ENCODE measurements at regions of chr6 and their contacts with region 1.

Region 1: GRCh38 chr6:10528170-10528981 is 7.2 kb downstream of the GCNT2 start:
- DNase-seq: peak; percentile 88
- ATAC-seq: peak; percentile 78
- H3K4me3 ChIP-seq: peak overlapping the region; percentile 81
- H3K27ac ChIP-seq: peak overlapping the region; percentile 82
- H3K4me1 ChIP-seq: peaks cover 25% of the 10 kb centered on the region
- H3K27me3 ChIP-seq: no peaks in the 10 kb centered on the region
- CTCF ChIP-seq: 0 out of 2 replicates have a peak, but pooled peaks have one; percentile 9

Region 2: DNA sequence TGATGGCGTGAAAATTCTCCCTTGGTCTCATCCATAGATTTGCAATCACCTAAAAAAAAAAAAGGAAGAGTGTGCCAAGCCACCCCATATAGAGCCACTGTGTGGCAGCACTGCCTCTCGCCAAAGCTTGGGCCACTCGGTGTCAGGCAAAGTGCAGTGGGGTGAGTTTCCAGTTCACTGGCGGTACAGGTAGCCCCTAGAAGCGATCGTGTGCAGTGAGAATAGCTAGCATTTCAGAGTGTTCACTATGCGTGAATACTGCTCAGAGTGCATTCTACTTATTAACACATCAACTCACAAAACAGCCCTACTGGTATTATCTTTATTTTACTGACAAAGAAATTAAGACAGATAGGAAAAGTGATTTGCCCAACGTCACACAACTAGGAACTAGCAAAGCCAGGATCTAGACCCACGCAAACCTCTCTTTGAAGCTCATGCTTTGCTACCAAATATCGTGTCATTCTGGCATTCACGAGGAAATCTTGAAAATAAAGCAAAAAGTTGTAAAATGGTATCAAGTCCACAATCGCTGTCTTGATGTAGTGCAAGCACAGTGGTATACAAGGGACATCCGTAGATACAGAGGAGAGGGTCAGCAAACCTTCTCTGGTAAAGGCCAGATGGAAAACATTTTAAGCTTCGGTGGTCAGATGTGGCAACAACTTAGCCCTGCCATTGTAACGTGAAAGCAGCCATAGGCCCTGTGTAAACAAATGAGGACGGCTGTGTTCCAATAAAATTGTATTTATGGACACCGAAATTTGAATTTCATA is 17.6 kb before region 1 on chr6:
- CTCF ChIA-PET with region 1: no interaction called
- POLR2A ChIA-PET with region 1: no interaction called
- intact Hi-C with region 1: loop called (anchors 1 kb)
- DNase-seq: peak; percentile 77
- ATAC-seq: peak; percentile 98
- H3K4me3 ChIP-seq: peak overlapping the region; percentile 55
- H3K27ac ChIP-seq: no peak overlapping the region
- H3K4me1 ChIP-seq: peaks cover 11% of the 10 kb centered on the region
- H3K27me3 ChIP-seq: no peaks in the 10 kb centered on the region
- CTCF ChIP-seq: peak; percentile 92

Region 3: DNA sequence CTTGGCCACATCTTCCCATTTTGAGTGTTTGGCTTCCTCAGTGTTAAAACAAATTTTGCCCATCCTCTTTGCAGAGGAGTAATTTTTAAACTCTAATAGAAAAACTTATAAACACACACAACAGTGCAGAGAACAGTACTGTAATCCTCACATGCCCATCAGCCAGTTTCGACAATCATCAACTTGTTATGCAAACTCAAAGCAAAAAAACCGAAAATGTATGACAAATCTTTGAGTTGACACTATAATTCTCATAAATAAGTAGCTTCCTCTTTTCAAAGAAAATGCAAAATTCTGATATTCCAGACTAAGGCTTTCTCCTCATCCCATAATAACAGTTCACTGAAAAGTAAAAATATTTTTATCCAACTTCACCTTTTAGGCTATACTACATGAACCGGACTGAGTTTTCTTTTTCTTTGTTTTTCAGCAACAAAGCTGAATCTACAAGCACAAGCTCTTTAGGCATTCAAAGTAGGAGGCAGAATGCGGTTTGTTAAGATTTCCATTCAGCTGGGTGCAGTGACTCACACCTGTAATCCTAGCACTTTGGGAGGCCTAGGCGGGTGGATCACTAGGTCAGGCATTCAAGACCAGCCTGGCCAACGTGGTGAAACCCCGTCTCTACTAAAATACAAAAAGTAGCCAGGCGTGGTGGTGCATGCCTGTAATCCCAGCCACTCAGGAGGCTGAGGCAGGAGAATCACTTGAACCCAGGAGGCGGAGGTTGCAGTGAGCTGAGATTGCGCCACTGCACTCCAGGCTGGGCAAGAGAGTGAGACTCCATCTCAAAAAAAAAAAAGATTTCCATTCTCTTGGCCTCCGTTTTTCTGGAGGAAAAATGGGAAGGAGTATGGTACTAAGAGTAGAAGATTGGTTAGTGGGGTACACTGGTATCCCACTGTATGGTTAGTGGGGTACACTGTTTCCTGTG is 67.6 kb after region 1 on chr6:
- CTCF ChIA-PET with region 1: no interaction called
- POLR2A ChIA-PET with region 1: no interaction called
- intact Hi-C with region 1: loop called (anchors 5 kb)
- DNase-seq: peak; percentile 72
- ATAC-seq: peak; percentile 94
- H3K4me3 ChIP-seq: no peak overlapping the region
- H3K27ac ChIP-seq: peak overlapping the region; percentile 8; the same call in 1 of the 2 replicates
- H3K4me1 ChIP-seq: peaks cover 7% of the 10 kb centered on the region; the same call in 1 of the 2 replicates
- H3K27me3 ChIP-seq: no peaks in the 10 kb centered on the region
- CTCF ChIP-seq: no peak

Region 4: GRCh38 chr6:10613066-10613465 is 84.7 kb after region 1 on chr6:
- CTCF ChIA-PET with region 1: no interaction called
- POLR2A ChIA-PET with region 1: no interaction called
- intact Hi-C with region 1: loop called (anchors 2 kb)
- DNase-seq: peak; percentile 57
- ATAC-seq: peak; percentile 94
- H3K4me3 ChIP-seq: no peak overlapping the region
- H3K27ac ChIP-seq: 0 out of 2 replicates have a peak overlapping the region, but pooled peaks have one; percentile 28
- H3K4me1 ChIP-seq: peaks cover 21% of the 10 kb centered on the region
- H3K27me3 ChIP-seq: no peaks in the 10 kb centered on the region
- CTCF ChIP-seq: no peak

Region 5: DNA sequence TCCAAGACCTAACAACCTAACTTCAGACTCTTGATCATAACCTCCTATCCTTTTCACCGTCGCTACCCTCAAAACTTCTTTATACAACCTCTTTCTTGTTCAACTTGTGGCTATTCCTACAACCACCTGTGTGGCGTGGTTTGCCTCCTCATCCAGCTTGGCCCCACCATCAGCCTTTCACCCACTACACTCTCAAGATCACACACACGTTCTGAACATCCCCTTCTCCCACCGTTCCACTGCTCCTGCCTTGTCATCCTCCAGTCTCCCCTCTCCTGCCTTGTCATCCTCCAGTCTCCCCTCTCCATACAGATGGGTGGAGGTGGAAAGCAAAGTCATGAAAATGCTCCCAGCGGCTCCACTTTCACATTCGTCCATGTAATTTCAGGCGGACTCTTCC is 295.9 kb after region 1 on chr6:
- CTCF ChIA-PET with region 1: no interaction called
- POLR2A ChIA-PET with region 1: no interaction called
- intact Hi-C with region 1: no loop called
- DNase-seq: no peak
- ATAC-seq: no peak
- H3K4me3 ChIP-seq: no peak overlapping the region
- H3K27ac ChIP-seq: no peak overlapping the region
- H3K4me1 ChIP-seq: no peaks in the 10 kb centered on the region
- H3K27me3 ChIP-seq: no peaks in the 10 kb centered on the region
- CTCF ChIP-seq: no peak

Measured in PC-3 (cell line).